Aorta (tissue), 5 donors: ENCODE measurements at regions of chrX and their contacts with region 1.

Region 1: GRCh38 chrX:1453951-1454785 is 1.5 kb upstream of the ASMTL start:
- DNase-seq: peak; percentile 93 to 97
- ATAC-seq: peak; percentile 65
- H3K4me3 ChIP-seq: peak overlapping the region; percentile 31 to 72
- H3K27ac ChIP-seq: no peak overlapping the region
- H3K4me1 ChIP-seq: no peaks in the 10 kb centered on the region
- H3K27me3 ChIP-seq: no peaks in the 10 kb centered on the region

Region 2: DNA sequence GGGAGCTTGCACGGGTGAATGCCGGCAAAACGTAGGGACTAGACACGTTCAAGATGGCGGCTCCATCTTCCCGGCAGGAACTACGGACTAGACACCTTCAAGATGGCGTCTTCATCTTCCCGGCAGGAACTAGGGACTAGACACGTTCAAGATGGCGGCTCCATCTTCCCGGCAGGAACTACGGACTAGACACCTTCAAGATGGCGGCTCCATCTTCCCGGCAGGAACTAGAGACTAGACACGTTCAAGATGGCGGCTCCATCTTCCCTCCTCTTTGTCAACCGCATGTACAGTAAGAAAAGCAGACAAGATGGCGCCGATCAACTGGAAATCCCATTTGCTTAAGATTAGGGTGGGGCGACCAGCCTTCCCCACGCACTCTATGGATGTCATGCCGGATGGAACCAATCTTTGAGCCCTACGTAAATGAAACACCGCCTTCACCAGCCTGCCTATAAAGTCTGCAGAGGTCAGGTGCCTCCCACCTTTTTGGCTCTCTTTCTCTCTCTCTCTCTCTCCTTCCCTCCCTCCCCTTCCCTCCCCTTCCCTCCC is 464.1 kb before region 1 on chrX:
- intact Hi-C with region 1: loop called in 1 of 2 experiments (anchors 10 kb)
- DNase-seq: peak; percentile 86 to 92
- ATAC-seq: peak; percentile 94
- H3K4me3 ChIP-seq: no peak overlapping the region
- H3K27ac ChIP-seq: no peak overlapping the region
- H3K4me1 ChIP-seq: no peaks in the 10 kb centered on the region
- H3K27me3 ChIP-seq: no peaks in the 10 kb centered on the region

Region 3: DNA sequence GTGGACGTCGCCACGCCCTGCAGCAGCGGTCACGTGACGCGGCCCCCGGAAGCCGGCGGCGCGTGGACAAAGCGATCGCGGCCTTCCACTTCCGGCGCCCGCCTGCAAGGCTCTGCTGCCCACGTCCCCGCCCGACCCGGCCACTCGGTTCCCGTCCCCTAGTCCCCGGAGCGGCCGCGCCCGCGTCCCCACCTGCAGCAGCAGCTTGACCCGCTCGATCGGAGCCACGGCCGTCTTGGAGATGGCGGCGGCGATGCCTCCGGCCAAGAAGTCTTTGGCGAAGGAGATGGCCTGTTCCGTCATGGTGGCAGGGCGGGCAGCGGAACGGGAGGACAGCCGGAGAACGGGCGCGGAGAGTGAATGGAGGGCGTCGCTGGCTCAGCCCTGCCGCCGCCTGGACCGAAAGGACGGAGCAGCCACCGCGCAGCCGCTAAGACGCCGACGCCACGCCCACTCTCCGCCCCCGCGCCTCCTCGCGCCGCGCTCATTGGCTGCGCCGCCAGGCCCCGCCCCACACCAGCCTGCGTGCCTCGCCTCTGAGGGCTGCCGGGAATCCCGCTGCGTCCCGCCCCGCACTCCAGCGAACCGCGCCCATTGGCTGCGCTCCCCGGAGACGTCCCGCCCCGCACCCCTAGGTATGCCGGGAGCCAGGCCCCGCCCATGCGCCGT is 62.3 kb before region 1 on chrX and contains the start of gene SLC25A6:
- intact Hi-C with region 1: loop called (anchors 1 to 5 kb)
- DNase-seq: peak; percentile 99 to 100
- ATAC-seq: peak; percentile 99
- H3K4me3 ChIP-seq: peak within 1 kb of the TSS; percentile 72 to 81
- H3K27ac ChIP-seq: peak within 1 kb of the TSS; percentile 20 to 90
- H3K4me1 ChIP-seq: no peaks in the 10 kb centered on the region
- H3K27me3 ChIP-seq: no peaks in the 10 kb centered on the region
- total RNA-seq, gene SLC25A6: 207 to 212 TPM

Region 4: GRCh38 chrX:1591102-1591900 is 137.1 kb after region 1 on chrX and contains the start of gene AKAP17A:
- intact Hi-C with region 1: loop called (anchors 5 kb)
- DNase-seq: peak; percentile 96 to 99
- ATAC-seq: peak; percentile 97
- H3K4me3 ChIP-seq: peak within 1 kb of the TSS; percentile 89 to 93
- H3K27ac ChIP-seq: peak within 1 kb of the TSS in 1 of 2 donors; percentile 14
- H3K4me1 ChIP-seq: no peaks in the 10 kb centered on the region
- H3K27me3 ChIP-seq: no peaks in the 10 kb centered on the region
- total RNA-seq, gene AKAP17A: 33.0 to 53.7 TPM

Region 5: DNA sequence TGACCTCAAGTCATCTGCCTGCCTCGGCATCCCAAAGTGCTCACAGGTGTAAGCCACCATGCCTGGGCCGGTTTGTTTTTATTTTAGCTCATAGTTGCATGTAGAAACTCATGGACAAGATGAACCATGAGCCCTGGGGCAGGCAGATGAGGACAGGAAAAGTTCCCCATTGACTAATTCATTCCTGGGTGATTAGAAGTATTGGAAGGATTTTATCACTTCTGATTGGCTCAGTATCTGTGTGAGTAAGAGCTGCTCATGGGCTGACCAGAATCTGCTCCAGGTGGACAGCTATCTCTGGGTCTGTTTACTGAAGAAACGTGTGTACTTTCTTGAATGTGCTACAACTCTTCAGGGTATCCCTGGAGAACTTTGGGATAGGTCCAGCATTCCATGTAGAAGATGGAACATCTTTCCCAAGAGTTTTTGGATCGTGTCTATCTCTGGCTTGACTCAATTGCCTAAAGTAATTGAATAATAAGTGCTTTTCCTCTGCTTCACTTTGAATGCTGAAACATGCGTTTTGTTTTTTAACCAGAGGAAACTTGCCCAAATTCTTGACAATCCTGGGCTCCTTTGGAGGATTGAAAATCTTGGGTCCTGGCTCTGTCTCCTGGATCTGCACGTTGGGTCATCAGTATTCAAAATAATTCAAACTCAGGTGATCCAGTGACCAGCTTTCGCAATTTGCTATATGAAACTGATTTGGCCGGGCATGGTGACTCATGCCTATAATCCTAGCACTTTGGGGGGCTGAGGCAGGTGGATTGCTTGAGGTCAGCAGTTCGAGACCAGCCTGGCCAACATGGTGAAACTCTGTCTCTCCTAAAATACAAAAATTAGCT is 1135.2 kb after region 1 on chrX:
- intact Hi-C with region 1: loop called in 1 of 2 experiments (anchors 5 kb)
- DNase-seq: peak in 1 of 2 donors; percentile 21
- ATAC-seq: no peak
- H3K4me3 ChIP-seq: no peak overlapping the region
- H3K27ac ChIP-seq: no peak overlapping the region
- H3K4me1 ChIP-seq: no peaks in the 10 kb centered on the region
- H3K27me3 ChIP-seq: no peaks in the 10 kb centered on the region

Region 6: DNA sequence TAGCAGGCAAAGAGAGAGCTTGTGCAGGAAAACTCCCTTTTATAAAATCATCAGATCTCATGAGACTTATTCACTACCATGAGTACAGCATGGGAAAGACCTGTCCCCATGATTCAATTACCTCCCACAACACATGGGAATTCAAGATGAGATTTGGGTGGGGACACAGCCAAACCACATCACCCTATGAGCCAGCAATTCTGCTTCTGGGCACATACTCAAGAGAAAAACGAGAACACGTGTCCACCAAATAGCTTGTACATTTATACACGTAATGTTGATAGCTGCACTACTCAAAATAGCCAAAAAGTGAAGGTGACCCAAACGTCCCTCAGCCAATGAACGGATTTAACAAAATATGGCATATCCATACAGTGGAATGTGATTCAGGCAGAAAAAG is 1141.1 kb after region 1 on chrX:
- intact Hi-C with region 1: loop called (anchors 5 kb)
- DNase-seq: no peak
- ATAC-seq: no peak
- H3K4me3 ChIP-seq: no peak overlapping the region
- H3K27ac ChIP-seq: no peak overlapping the region
- H3K4me1 ChIP-seq: no peaks in the 10 kb centered on the region
- H3K27me3 ChIP-seq: no peaks in the 10 kb centered on the region

Region 7: DNA sequence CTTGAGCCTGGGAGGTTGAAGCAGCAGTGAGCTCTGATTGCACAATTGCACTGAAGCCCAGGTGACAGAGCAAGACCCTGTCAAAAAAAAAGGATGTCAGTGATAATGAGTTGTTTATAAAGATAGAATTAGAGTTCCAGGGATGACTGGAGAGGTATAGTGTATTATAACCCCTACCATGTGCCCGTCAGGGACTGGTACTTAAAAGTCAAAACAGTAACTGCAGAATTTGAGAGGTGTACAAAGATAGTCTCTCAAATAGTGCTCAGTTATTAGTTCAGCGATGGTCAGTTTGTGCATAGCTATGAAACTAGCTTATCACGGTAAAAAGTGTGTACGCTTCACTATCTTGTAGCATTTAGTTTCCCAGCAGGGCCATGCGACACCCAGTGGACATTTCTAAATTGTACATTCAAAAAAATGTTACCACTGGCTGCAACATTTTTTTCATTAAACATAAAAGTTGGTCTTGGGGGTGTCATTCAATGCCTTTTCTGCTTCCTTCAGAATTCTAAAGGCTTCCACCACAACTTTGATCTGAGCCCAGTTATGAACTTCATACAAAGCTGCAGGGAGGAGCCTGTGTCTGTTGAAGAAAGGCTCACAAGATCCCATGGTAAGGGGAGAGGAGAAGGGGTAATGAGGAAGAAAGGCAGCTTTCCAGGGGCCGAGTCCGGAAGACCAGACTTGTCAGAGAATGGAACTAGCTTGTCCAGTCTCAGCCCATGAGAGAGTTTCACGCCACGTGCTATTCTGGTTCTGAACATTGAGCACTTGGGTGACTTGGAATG is 1365.4 kb after region 1 on chrX:
- intact Hi-C with region 1: loop called in 1 of 2 experiments (anchors 10 kb)
- DNase-seq: no peak
- ATAC-seq: no peak
- H3K4me3 ChIP-seq: no peak overlapping the region
- H3K27ac ChIP-seq: no peak overlapping the region
- H3K4me1 ChIP-seq: no peaks in the 10 kb centered on the region
- H3K27me3 ChIP-seq: peaks cover 0 to 4% of the 10 kb centered on the region in 2 donors